Activated CD4-positive, alpha-beta T cell treated with anti-CD3 and anti-CD28 coated beads for 36 hours (primary cell): ENCODE measurements at regions of chrX and their contacts with region 1.

Region 1: DNA sequence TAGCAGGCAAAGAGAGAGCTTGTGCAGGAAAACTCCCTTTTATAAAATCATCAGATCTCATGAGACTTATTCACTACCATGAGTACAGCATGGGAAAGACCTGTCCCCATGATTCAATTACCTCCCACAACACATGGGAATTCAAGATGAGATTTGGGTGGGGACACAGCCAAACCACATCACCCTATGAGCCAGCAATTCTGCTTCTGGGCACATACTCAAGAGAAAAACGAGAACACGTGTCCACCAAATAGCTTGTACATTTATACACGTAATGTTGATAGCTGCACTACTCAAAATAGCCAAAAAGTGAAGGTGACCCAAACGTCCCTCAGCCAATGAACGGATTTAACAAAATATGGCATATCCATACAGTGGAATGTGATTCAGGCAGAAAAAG is 94.5 kb upstream of the DHRSX start:
- DNase-seq: no peak
- ATAC-seq: no peak
- H3K4me3 Mint-ChIP-seq: no peak overlapping the region
- H3K27ac Mint-ChIP-seq: no peak overlapping the region
- H3K4me1 Mint-ChIP-seq: no peaks in the 10 kb centered on the region
- H3K27me3 Mint-ChIP-seq: no peaks in the 10 kb centered on the region

Region 2: DNA sequence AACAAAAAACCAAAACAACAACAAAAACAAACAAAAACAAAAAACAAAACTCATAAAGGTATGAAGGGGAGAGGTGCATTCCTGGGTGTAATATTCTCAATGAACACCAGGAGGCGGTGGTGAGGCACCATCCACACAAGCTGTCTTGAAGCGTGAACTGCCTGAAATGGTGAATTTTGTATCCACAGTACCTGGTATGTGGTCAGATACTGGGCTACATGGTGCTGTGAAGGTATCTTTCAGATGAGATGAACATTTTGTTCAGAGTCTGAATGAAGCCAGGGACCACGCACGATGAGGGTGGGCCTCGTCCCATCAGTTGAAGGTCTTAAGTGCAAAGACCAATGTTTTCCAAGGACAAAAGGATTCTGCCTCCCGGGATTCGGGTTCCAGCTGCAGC is 921.9 kb before region 1 on chrX:
- CTCF ChIA-PET with region 1: no interaction called
- POLR2A ChIA-PET with region 1: no interaction called
- intact Hi-C with region 1: loop called in 1 of 2 experiments (anchors 1 kb)
- DNase-seq: peak; percentile 67
- ATAC-seq: peak; percentile 65
- H3K4me3 Mint-ChIP-seq: no peak overlapping the region
- H3K27ac Mint-ChIP-seq: no peak overlapping the region
- H3K4me1 Mint-ChIP-seq: no peaks in the 10 kb centered on the region
- H3K27me3 Mint-ChIP-seq: no peaks in the 10 kb centered on the region

Region 3: GRCh38 chrX:3244955-3245354 is 649.7 kb after region 1 on chrX:
- CTCF ChIA-PET with region 1: no interaction called
- POLR2A ChIA-PET with region 1: no interaction called
- intact Hi-C with region 1: no loop called
- DNase-seq: no peak
- ATAC-seq: no peak
- H3K4me3 Mint-ChIP-seq: no peak overlapping the region
- H3K27ac Mint-ChIP-seq: no peak overlapping the region
- H3K4me1 Mint-ChIP-seq: no peaks in the 10 kb centered on the region
- H3K27me3 Mint-ChIP-seq: no peaks in the 10 kb centered on the region